Dendritic cell treated with granulocyte-macrophage colony-stimulating factor and Interleukin-4, amounts not matched to agents 40 ng/mL and 50 ng/mL, for 4 days (primary cell): ENCODE measurements at regions of chr7 and their contacts with region 1.

Region 1: GRCh38 chr7:104973909-104974415 is 40.0 kb upstream of the KMT2E start:
- H3K4me3 Mint-ChIP-seq: peak overlapping the region; percentile 43
- H3K27ac Mint-ChIP-seq: peak overlapping the region; percentile 92
- H3K4me1 Mint-ChIP-seq: peaks cover 44% of the 10 kb centered on the region
- H3K27me3 Mint-ChIP-seq: no peaks in the 10 kb centered on the region

Region 2: GRCh38 chr7:104931181-104931781 is 42.7 kb before region 1 on chr7:
- intact Hi-C with region 1: loop called (anchors 5 kb)
- H3K4me3 Mint-ChIP-seq: no peak overlapping the region
- H3K27ac Mint-ChIP-seq: peak overlapping the region; percentile 54
- H3K4me1 Mint-ChIP-seq: peaks cover 38% of the 10 kb centered on the region
- H3K27me3 Mint-ChIP-seq: no peaks in the 10 kb centered on the region

Region 3: GRCh38 chr7:104943502-104944343 is 30.2 kb before region 1 on chr7:
- intact Hi-C with region 1: no loop called
- H3K4me3 Mint-ChIP-seq: peak overlapping the region; percentile 77
- H3K27ac Mint-ChIP-seq: peak overlapping the region; percentile 100
- H3K4me1 Mint-ChIP-seq: peaks cover 66% of the 10 kb centered on the region
- H3K27me3 Mint-ChIP-seq: no peaks in the 10 kb centered on the region